CD4-positive, alpha-beta memory T cell (primary cell): ENCODE measurements at regions of chr5 and their contacts with region 1.

Region 1: GRCh38 chr5:131589510-131590348 is 45.3 kb downstream of the RAPGEF6 start:
- DNase-seq: peak in 4 of 5 donors; percentile 56 to 60 (median 58)
- H3K4me3 ChIP-seq: no peak overlapping the region
- H3K4me3 Mint-ChIP-seq: no peak overlapping the region
- H3K27ac ChIP-seq: no peak overlapping the region
- H3K27ac Mint-ChIP-seq: peak overlapping the region in 4 of 7 donors; percentile 22 to 77 (median 52)
- H3K4me1 ChIP-seq: peaks cover 17% of the 10 kb centered on the region
- H3K4me1 Mint-ChIP-seq: peaks cover 21 to 58% (median 32%) of the 10 kb centered on the region in 4 donors
- H3K27me3 ChIP-seq: no peaks in the 10 kb centered on the region
- H3K27me3 Mint-ChIP-seq: no peaks in the 10 kb centered on the region

Region 2: DNA sequence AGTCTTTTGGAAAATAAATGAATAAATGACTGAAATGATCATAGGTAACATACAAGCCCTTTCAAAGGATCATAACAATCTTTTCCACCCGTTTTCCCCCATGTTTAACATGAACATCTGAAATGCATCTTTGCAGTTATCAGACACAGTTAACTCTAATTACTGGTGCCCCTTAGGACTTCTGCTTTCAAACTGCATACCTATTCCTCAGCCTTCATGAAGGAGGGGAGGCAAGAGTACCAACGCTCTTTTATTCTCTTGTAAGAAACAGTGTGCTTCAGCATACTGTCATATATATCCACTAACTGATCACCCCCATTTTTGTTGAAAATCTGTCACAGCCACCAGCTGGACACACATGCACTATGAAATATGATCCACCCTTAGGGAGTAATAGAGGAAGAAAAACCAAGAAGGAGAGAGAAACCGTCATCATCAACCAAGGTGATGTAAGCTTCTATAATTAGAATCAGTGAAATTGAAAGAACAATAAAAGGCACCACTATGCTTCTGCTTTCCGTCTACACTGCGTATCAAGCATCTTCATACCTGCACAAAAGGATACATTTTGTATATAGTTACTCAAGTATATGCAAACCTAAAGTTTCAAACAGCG is 53.4 kb before region 1 on chr5:
- CTCF ChIA-PET with region 1: interaction called, 37 read pairs
- POLR2A ChIA-PET with region 1: interaction called, 5 read pairs
- intact Hi-C with region 1: no loop called
- DNase-seq: peak in 2 of 5 donors; percentile 35 to 45
- H3K4me3 ChIP-seq: no peak overlapping the region
- H3K4me3 Mint-ChIP-seq: peak overlapping the region in 7 of 8 donors; percentile 39 to 83 (median 69)
- H3K27ac ChIP-seq: peak overlapping the region; percentile 35
- H3K27ac Mint-ChIP-seq: peak overlapping the region; percentile 66 to 96 (median 81)
- H3K4me1 ChIP-seq: peaks cover 93% of the 10 kb centered on the region
- H3K4me1 Mint-ChIP-seq: peaks cover 64 to 85% (median 73%) of the 10 kb centered on the region in 4 donors
- H3K27me3 ChIP-seq: no peaks in the 10 kb centered on the region
- H3K27me3 Mint-ChIP-seq: no peaks in the 10 kb centered on the region

Region 3: GRCh38 chr5:131607903-131608540 is 18.3 kb after region 1 on chr5:
- CTCF ChIA-PET with region 1: interaction called, 15 read pairs
- POLR2A ChIA-PET with region 1: no interaction called
- intact Hi-C with region 1: no loop called
- DNase-seq: no peak
- H3K4me3 ChIP-seq: no peak overlapping the region
- H3K4me3 Mint-ChIP-seq: peak overlapping the region in 1 of 8 donors; percentile 15
- H3K27ac ChIP-seq: no peak overlapping the region
- H3K27ac Mint-ChIP-seq: peak overlapping the region in 4 of 7 donors; percentile 2 to 49 (median 22)
- H3K4me1 ChIP-seq: peaks cover 51% of the 10 kb centered on the region
- H3K4me1 Mint-ChIP-seq: peaks cover 45 to 68% (median 58%) of the 10 kb centered on the region in 4 donors
- H3K27me3 ChIP-seq: no peaks in the 10 kb centered on the region
- H3K27me3 Mint-ChIP-seq: no peaks in the 10 kb centered on the region

Region 4: GRCh38 chr5:131634996-131635754 is 45.4 kb after region 1 on chr5 and contains the start of gene RAPGEF6:
- CTCF ChIA-PET with region 1: interaction called, 10 read pairs
- POLR2A ChIA-PET with region 1: interaction called, 9 read pairs
- intact Hi-C with region 1: loop called (anchors 2 kb)
- DNase-seq: peak; percentile 95 to 99 (median 99)
- H3K4me3 ChIP-seq: peak within 1 kb of the TSS; percentile 79 to 98
- H3K4me3 Mint-ChIP-seq: peak within 1 kb of the TSS; percentile 92 to 99 (median 95)
- H3K27ac ChIP-seq: peak within 1 kb of the TSS; percentile 97
- H3K27ac Mint-ChIP-seq: peak within 1 kb of the TSS; percentile 97 to 100 (median 99)
- H3K4me1 ChIP-seq: peaks cover 57% of the 10 kb centered on the region
- H3K4me1 Mint-ChIP-seq: peaks cover 18 to 40% (median 25%) of the 10 kb centered on the region in 4 donors
- H3K27me3 ChIP-seq: no peaks in the 10 kb centered on the region
- H3K27me3 Mint-ChIP-seq: no peaks in the 10 kb centered on the region
- total RNA-seq, gene RAPGEF6: 114 to 121 TPM